CD8-positive, alpha-beta T cell (primary cell): ENCODE measurements at regions of chr3 and their contacts with region 1.

Region 1: DNA sequence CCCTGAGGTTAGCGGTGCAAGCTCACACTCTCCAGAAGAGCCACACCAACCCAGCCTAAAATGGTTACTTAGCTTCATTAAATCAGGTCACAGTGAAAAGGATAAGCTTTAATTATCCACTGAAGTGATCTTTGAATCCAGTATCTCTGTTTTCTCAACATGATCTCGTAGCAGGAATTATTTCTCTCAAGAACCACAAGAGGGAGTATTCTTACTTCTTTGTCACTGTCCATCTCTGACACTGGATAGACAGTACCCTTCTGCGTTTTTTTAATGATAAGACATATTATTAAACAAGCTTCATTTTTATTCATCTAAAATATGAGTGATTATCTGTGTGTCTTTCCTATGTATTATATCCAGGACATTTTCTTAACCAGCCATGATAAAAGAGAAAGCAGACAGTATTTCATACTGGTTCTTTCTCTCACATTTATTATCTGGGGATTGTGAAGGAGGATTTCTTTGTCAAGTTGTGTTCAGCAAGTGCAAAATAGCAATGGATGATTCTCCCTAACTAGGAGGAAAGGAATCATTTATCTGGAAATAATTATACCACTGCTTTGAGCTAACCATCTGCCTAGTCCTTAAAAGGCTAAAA is 105.4 kb upstream of the CCDC54 start:
- DNase-seq: peak in 2 of 9 experiments; percentile 12 to 35
- ATAC-seq: peak; percentile 38
- H3K4me3 ChIP-seq: no peak overlapping the region
- H3K4me3 Mint-ChIP-seq: no peak overlapping the region
- H3K27ac ChIP-seq: no peak overlapping the region
- H3K27ac Mint-ChIP-seq: no peak overlapping the region
- H3K4me1 ChIP-seq: no peaks in the 10 kb centered on the region
- H3K4me1 Mint-ChIP-seq: no peaks in the 10 kb centered on the region
- H3K27me3 ChIP-seq: peaks cover 0 to 5% of the 10 kb centered on the region in 2 experiments
- H3K27me3 Mint-ChIP-seq: peaks cover 7% of the 10 kb centered on the region
- CTCF ChIP-seq: peak; percentile 69

Region 2: DNA sequence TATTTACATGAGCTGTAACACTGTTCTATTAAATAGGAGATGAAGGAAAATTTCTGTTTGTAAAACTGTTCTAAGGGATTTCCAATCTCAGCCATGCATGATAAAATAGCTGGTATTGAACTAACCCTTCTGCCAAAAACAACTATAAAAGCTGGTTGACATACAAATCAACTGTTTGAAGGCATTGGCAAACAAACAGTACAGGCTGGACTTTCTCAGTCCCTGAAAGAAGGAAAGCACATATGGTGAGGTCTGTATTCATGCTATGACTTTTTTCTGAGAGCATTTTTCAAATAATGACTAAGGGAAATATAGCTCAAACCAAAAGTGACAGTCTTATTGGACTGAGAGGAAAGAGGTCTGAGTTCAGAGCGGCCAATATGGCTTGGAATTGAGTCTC is 11.7 kb before region 1 on chr3:
- CTCF ChIA-PET with region 1: interaction called, 14 read pairs
- POLR2A ChIA-PET with region 1: no interaction called
- intact Hi-C with region 1: no loop called
- DNase-seq: no peak
- ATAC-seq: no peak
- H3K4me3 ChIP-seq: no peak overlapping the region
- H3K4me3 Mint-ChIP-seq: no peak overlapping the region
- H3K27ac ChIP-seq: no peak overlapping the region
- H3K27ac Mint-ChIP-seq: no peak overlapping the region
- H3K4me1 ChIP-seq: no peaks in the 10 kb centered on the region
- H3K4me1 Mint-ChIP-seq: no peaks in the 10 kb centered on the region
- H3K27me3 ChIP-seq: peaks cover 0 to 5% of the 10 kb centered on the region in 2 experiments
- H3K27me3 Mint-ChIP-seq: peaks cover 8% of the 10 kb centered on the region
- CTCF ChIP-seq: no peak

Region 3: GRCh38 chr3:107284612-107285011 is 12.7 kb after region 1 on chr3:
- CTCF ChIA-PET with region 1: interaction called, 16 read pairs
- POLR2A ChIA-PET with region 1: no interaction called
- intact Hi-C with region 1: no loop called
- DNase-seq: no peak
- ATAC-seq: no peak
- H3K4me3 ChIP-seq: no peak overlapping the region
- H3K4me3 Mint-ChIP-seq: no peak overlapping the region
- H3K27ac ChIP-seq: no peak overlapping the region
- H3K27ac Mint-ChIP-seq: no peak overlapping the region
- H3K4me1 ChIP-seq: no peaks in the 10 kb centered on the region
- H3K4me1 Mint-ChIP-seq: no peaks in the 10 kb centered on the region
- H3K27me3 ChIP-seq: no peaks in the 10 kb centered on the region
- H3K27me3 Mint-ChIP-seq: peaks cover 8% of the 10 kb centered on the region
- CTCF ChIP-seq: no peak

Region 4: GRCh38 chr3:107421170-107421792 is 149.4 kb after region 1 on chr3:
- CTCF ChIA-PET with region 1: interaction called, 35 read pairs
- POLR2A ChIA-PET with region 1: no interaction called
- intact Hi-C with region 1: loop called (anchors 2 to 5 kb)
- DNase-seq: peak in 2 of 9 experiments; percentile 57 to 71
- ATAC-seq: peak; percentile 49
- H3K4me3 ChIP-seq: no peak overlapping the region
- H3K4me3 Mint-ChIP-seq: peak overlapping the region; percentile 57
- H3K27ac ChIP-seq: no peak overlapping the region
- H3K27ac Mint-ChIP-seq: no peak overlapping the region
- H3K4me1 ChIP-seq: no peaks in the 10 kb centered on the region
- H3K4me1 Mint-ChIP-seq: peaks cover 3% of the 10 kb centered on the region
- H3K27me3 ChIP-seq: peaks cover 0 to 5% of the 10 kb centered on the region in 2 experiments
- H3K27me3 Mint-ChIP-seq: peaks cover 7% of the 10 kb centered on the region
- CTCF ChIP-seq: no peak

Region 5: DNA sequence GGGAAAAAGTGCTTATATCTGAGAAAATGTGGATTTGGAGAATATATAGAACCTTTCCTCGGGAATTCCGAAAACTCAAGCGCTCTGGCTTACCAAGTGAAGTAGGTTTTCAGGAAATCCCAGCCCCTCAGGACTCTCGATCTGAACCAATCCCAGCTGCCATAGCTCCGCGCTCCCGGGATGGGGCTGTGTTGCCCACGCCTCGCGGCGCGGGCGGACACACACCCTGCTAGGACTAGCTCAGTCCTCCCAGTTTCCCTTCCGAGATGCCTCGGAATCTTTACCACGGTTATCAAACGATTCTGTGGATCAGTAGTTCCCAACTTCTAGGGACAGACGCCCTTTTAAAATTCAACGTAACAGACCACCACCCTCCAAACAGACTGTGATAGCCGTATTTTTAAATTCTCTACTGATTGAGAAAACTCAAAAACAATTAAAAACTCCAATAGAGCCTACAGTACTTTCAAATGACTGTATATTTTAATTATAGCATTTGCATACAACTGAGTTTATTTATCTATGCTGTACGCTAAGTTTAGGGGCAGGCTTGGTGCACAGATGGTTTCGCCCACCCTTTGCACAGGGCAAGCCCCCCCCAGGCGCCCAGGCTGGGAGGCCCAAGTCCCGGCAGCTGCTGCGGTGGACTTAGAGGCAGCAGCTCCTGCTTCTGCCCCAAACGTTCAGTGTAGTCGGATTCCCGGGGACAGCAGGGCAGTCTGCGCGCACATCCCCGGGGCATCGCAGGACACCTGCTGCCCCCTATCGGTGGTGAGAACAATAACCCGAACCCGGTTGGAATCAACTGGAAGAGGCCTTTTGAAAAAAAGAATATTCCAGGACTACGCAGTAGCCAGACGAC is 157.7 kb after region 1 on chr3:
- CTCF ChIA-PET with region 1: interaction called, 12 read pairs
- POLR2A ChIA-PET with region 1: no interaction called
- intact Hi-C with region 1: loop called in 1 of 2 experiments (anchors 5 kb)
- DNase-seq: peak; percentile 19 to 78 (median 47)
- ATAC-seq: peak; percentile 66
- H3K4me3 ChIP-seq: peak overlapping the region; percentile 57 to 69
- H3K4me3 Mint-ChIP-seq: peak overlapping the region; percentile 89
- H3K27ac ChIP-seq: no peak overlapping the region
- H3K27ac Mint-ChIP-seq: peak overlapping the region; percentile 14
- H3K4me1 ChIP-seq: peaks cover 11% of the 10 kb centered on the region
- H3K4me1 Mint-ChIP-seq: peaks cover 19% of the 10 kb centered on the region
- H3K27me3 ChIP-seq: peaks cover 0 to 3% of the 10 kb centered on the region in 2 experiments
- H3K27me3 Mint-ChIP-seq: peaks cover 13% of the 10 kb centered on the region
- CTCF ChIP-seq: peak; percentile 77

Region 6: DNA sequence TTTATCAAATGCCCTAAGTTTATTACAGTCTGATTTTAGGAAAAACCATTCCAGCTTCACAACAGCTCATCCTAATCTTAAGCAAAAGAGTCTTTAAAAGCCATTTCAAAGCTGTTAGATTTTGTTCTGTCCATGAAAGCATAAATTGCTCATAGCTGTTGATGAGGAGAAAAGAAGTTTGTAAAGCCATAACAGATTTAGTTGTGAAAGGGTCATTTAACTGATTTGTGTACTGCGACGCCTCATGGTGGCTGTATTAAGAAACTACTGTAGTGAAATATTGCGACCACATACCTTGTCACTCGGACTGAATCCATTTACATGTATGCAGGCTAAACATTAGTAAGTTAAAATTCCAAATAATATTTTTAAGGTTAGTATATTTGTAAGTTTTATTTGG is 271.8 kb after region 1 on chr3:
- CTCF ChIA-PET with region 1: interaction called, 6 read pairs
- POLR2A ChIA-PET with region 1: no interaction called
- intact Hi-C with region 1: loop called in 1 of 2 experiments (anchors 5 kb)
- DNase-seq: peak in 2 of 9 experiments; percentile 30 to 49
- ATAC-seq: no peak
- H3K4me3 ChIP-seq: no peak overlapping the region
- H3K4me3 Mint-ChIP-seq: no peak overlapping the region
- H3K27ac ChIP-seq: no peak overlapping the region
- H3K27ac Mint-ChIP-seq: no peak overlapping the region
- H3K4me1 ChIP-seq: peaks cover 7% of the 10 kb centered on the region
- H3K4me1 Mint-ChIP-seq: peaks cover 40% of the 10 kb centered on the region
- H3K27me3 ChIP-seq: no peaks in the 10 kb centered on the region
- H3K27me3 Mint-ChIP-seq: no peaks in the 10 kb centered on the region
- CTCF ChIP-seq: no peak

Region 7: GRCh38 chr3:107740992-107741896 is 469.4 kb after region 1 on chr3:
- CTCF ChIA-PET with region 1: interaction called, 8 read pairs
- POLR2A ChIA-PET with region 1: no interaction called
- intact Hi-C with region 1: loop called in 1 of 2 experiments (anchors 10 kb)
- DNase-seq: peak in 2 of 9 experiments; percentile 24 to 45
- ATAC-seq: no peak
- H3K4me3 ChIP-seq: no peak overlapping the region
- H3K4me3 Mint-ChIP-seq: no peak overlapping the region
- H3K27ac ChIP-seq: no peak overlapping the region
- H3K27ac Mint-ChIP-seq: peak overlapping the region; percentile 20
- H3K4me1 ChIP-seq: no peaks in the 10 kb centered on the region
- H3K4me1 Mint-ChIP-seq: no peaks in the 10 kb centered on the region
- H3K27me3 ChIP-seq: no peaks in the 10 kb centered on the region
- H3K27me3 Mint-ChIP-seq: no peaks in the 10 kb centered on the region
- CTCF ChIP-seq: peak; percentile 74